ENCODE measurements at regions of chr11 and their contacts with region 1.

Region 1: DNA sequence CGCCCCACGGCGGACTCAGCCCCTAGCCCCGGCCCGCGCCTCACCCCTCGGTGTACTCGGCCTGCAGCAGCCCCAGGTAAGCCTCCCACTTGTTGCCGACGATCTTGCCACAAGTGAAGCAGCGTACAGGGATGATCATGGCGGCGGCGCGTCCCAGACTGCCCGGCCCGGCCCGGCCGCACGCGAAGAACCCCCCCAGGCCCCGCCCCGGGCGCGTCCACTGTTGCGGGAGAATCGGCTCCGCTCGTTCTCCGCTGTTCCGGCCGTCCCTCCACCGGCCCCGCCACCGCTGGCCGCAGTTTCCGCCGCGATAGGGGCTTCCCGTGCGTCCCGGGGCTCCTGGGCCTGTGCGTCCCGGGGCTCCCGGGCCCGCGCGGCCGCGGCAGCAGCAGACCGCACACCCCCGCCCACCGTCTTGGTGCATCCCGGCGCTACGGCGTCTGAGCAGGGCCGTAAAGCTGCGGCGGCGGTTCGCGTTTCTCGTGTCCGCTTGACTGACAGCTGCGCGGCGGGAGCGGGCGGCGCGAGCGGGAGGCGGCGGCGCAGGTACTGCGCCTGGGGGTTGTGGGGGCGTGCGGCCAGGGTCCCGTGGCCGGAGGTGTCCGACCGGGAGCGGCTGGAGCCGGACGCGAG is at the starts of genes POLR2L and TSPAN4:
- DNase-seq: peak; percentile 68 to 98 (median 84)
- ATAC-seq: peak; percentile 78 to 81
- H3K4me3 Mint-ChIP-seq: peak within 1 kb of the TSS; percentile 78 to 91 (median 85)
- H3K27ac Mint-ChIP-seq: peak within 1 kb of the TSS in 9 of 10 donors; percentile 62 to 83 (median 75)
- H3K4me1 Mint-ChIP-seq: peaks cover 11 to 41% (median 36%) of the 10 kb centered on the region in 4 donors
- H3K27me3 Mint-ChIP-seq: peaks cover 0 to 1% (median 0%) of the 10 kb centered on the region in 5 donors
- polyA plus RNA-seq, gene POLR2L: 96.5 to 102 (median 99.7) TPM
- polyA plus RNA-seq, gene TSPAN4: 7.2 to 12.8 (median 8.3) TPM

Region 2: DNA sequence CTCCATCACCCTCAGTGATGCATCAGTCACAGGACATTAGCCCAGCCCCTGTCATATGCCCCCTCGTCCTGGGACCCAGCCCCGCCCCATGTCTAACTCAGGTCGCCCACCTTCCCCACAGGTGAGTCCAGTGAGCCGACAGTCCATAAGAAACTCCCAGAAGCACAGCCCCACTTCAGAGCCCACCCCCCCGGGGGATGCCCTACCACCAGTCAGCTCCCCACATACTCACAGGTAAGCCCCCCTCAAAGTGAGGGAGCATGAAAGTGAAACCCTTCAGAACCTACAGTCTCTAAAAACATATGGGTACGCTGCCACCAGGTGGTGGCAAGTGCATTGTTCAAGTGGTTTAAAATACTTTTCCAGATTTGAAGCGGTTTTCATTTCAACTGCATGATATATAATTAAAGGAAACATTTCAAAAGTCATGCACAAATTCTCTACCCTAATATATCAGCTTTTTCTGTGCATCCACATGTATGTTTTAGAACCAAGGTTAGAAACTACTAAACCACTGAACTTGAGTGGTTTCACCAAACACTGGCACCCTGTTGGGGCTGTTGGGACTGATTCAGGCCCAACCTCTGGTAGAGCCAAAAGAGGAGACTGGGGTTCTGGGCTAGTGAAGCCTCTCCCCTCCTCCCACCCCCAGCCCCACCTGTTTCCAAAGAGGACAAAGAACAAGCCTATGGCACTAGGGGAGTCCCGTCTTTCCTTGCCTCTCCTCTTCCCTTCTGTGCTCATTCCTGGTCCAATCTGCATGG is 119.2 kb before region 1 on chr11:
- POLR2A ChIA-PET with region 1: no interaction called
- DNase-seq: peak in 9 of 10 donors; percentile 36 to 78 (median 55)
- ATAC-seq: peak; percentile 39 to 40
- H3K4me3 Mint-ChIP-seq: peak overlapping the region; percentile 52 to 92 (median 82)
- H3K27ac Mint-ChIP-seq: peak overlapping the region in 8 of 10 donors; percentile 9 to 94 (median 61)
- H3K4me1 Mint-ChIP-seq: peaks cover 8 to 32% (median 22%) of the 10 kb centered on the region in 4 donors
- H3K27me3 Mint-ChIP-seq: peaks cover 4 to 9% (median 7%) of the 10 kb centered on the region in 5 donors

Region 3: GRCh38 chr11:809287-810039 is 33.0 kb before region 1 on chr11 and contains the start of gene RPLP2:
- POLR2A ChIA-PET with region 1: interaction called, 13 read pairs
- DNase-seq: peak; percentile 95 to 100 (median 98)
- ATAC-seq: peak; percentile 82 to 87
- H3K4me3 Mint-ChIP-seq: peak within 1 kb of the TSS; percentile 88 to 98 (median 92)
- H3K27ac Mint-ChIP-seq: peak within 1 kb of the TSS; percentile 93 to 99 (median 99)
- H3K4me1 Mint-ChIP-seq: peaks cover 10 to 47% (median 39%) of the 10 kb centered on the region in 4 donors
- H3K27me3 Mint-ChIP-seq: no peaks in the 10 kb centered on the region
- polyA plus RNA-seq, gene RPLP2: 4,080 to 5,338 (median 4,376) TPM

Region 4: GRCh38 chr11:824292-824880 is 18.1 kb before region 1 on chr11:
- POLR2A ChIA-PET with region 1: interaction called, 127 read pairs
- DNase-seq: no peak
- ATAC-seq: no peak
- H3K4me3 Mint-ChIP-seq: no peak overlapping the region
- H3K27ac Mint-ChIP-seq: no peak overlapping the region
- H3K4me1 Mint-ChIP-seq: peaks cover 7 to 41% (median 40%) of the 10 kb centered on the region in 4 donors
- H3K27me3 Mint-ChIP-seq: peaks cover 0 to 33% (median 14%) of the 10 kb centered on the region in 5 donors

Region 5: DNA sequence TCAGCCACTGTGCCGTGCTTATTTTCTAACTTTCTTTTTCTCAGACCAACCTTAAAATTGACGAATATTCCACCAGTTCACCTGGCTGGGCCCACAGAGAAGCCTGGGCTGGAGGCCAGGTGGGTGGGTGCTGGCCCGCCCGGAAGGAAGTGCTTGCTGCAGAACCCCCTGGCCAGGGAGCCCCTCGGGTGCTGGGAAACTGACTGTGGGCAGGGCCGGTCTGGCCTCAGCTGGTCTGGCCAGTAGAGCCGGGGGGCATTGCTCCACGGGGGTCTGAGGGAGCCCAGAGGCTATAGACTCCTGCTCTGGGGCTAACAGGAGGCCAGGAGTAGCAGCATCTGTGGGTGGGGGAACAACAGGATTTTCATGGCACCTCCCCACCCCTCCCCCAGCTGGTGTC is 74.9 kb after region 1 on chr11:
- POLR2A ChIA-PET with region 1: no interaction called
- DNase-seq: no peak
- ATAC-seq: no peak
- H3K4me3 Mint-ChIP-seq: no peak overlapping the region
- H3K27ac Mint-ChIP-seq: peak overlapping the region in 2 of 10 donors; percentile 24 to 28
- H3K4me1 Mint-ChIP-seq: peaks cover 0 to 7% (median under 1%) of the 10 kb centered on the region in 4 donors
- H3K27me3 Mint-ChIP-seq: no peaks in the 10 kb centered on the region